Panc1 (cell line): ENCODE measurements at regions of chr3 and their contacts with region 1.

Region 1: GRCh38 chr3:128736601-128737000 is 10.6 kb downstream of the RAB7A start:
- DNase-seq: no peak
- ATAC-seq: no peak
- H3K4me3 ChIP-seq: no peak overlapping the region
- H3K27ac ChIP-seq: no peak overlapping the region
- H3K4me1 ChIP-seq: peaks cover 16% of the 10 kb centered on the region
- H3K27me3 ChIP-seq: no peaks in the 10 kb centered on the region
- CTCF ChIP-seq: no peak

Region 2: DNA sequence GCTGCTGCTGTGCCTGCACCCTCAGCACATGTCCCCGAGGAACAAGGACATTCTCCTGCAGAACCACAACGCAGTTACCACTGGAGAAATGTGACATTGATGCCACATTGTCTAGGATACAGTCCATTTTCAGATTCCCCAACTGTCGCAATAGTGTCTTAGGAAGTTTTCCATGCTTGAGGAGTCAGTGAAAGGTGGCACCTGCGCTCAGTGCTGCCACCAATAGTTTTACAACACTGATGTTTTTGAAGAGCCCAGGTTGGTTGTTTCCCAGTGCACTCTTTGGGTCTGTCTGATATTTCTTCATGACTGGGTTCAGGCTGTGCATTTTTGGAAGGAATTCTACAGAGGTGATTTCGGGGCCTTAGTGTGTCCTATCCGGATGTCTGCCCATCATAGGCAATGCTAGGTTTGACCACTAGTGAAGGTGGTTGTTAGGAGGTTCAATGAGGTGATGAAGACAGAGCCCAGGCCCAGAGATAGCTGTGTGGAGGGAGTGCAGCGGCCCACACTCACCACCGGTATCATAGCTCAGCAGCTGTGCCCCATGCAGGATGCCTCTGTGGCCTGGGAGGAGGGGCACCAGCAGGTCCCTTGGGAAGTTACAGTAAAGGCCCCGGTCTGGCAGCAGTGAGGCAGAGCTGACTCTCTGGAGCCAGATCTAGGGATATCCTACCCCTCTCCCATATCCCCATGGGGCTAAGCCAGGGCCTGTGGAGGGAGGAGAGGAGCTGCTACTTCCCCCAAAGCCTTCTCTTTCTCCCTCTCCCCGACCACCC is 366.5 kb before region 1 on chr3:
- CTCF ChIA-PET with region 1: no interaction called
- POLR2A ChIA-PET with region 1: no interaction called
- in situ Hi-C with region 1: no loop called
- intact Hi-C with region 1: no loop called
- DNase-seq: no peak
- ATAC-seq: no peak
- H3K4me3 ChIP-seq: no peak overlapping the region
- H3K27ac ChIP-seq: no peak overlapping the region
- H3K4me1 ChIP-seq: no peaks in the 10 kb centered on the region
- H3K27me3 ChIP-seq: no peaks in the 10 kb centered on the region
- CTCF ChIP-seq: no peak

Region 3: DNA sequence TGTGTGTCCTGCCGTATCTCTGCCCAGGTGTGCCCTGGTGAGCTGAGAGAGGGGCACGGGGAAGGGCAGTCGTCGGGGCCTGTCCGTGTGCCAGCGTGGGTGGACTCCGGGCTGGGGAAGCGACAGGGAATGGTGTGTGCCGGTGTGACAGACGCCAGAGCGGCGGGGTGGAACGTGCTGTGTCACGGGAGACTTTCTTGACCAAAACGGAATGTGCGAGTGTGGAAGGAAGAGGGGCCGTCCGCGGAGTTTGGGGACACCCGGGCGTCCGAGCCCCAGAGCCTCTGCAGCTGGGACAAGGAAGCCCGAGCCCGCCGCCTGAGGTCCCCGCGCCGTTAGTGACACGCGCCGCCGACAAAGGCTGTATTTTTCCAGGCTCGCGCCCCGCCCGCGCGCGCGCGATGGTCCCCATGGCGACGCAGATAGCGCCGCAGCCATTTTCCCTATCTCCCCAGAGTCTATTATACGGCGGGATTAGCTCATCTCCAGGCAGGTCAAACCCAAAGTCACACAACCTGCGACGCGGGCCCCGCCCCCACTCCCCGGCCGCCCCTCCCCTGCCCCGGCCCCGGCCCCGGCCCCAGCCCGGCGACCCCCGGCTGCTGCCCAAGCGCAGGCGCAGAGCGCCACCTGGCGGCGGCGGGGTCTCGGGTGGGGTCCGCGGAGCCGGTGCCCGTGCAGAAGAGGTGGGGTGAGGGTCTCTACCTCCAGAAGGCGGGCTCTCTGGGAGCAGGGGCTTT is 239.0 kb before region 1 on chr3:
- CTCF ChIA-PET with region 1: interaction called, 13 read pairs
- POLR2A ChIA-PET with region 1: no interaction called
- in situ Hi-C with region 1: no loop called
- intact Hi-C with region 1: no loop called
- DNase-seq: no peak
- ATAC-seq: peak; percentile 89
- H3K4me3 ChIP-seq: peak overlapping the region; percentile 41 to 55
- H3K27ac ChIP-seq: peak overlapping the region; percentile 80
- H3K4me1 ChIP-seq: peaks cover 18% of the 10 kb centered on the region; the same call in 1 of the 2 replicates
- H3K27me3 ChIP-seq: no peaks in the 10 kb centered on the region
- CTCF ChIP-seq: peak; percentile 99

Region 4: GRCh38 chr3:128532012-128532983 is 204.3 kb before region 1 on chr3:
- CTCF ChIA-PET with region 1: no interaction called
- POLR2A ChIA-PET with region 1: interaction called, 13 read pairs
- in situ Hi-C with region 1: no loop called
- intact Hi-C with region 1: no loop called
- DNase-seq: no peak
- ATAC-seq: no peak
- H3K4me3 ChIP-seq: no peak overlapping the region
- H3K27ac ChIP-seq: no peak overlapping the region
- H3K4me1 ChIP-seq: no peaks in the 10 kb centered on the region
- H3K27me3 ChIP-seq: peaks cover 41% of the 10 kb centered on the region
- CTCF ChIP-seq: no peak

Region 5: GRCh38 chr3:128549283-128550112 is 187.1 kb before region 1 on chr3:
- CTCF ChIA-PET with region 1: no interaction called
- POLR2A ChIA-PET with region 1: no interaction called
- in situ Hi-C with region 1: no loop called
- intact Hi-C with region 1: no loop called
- DNase-seq: no peak
- ATAC-seq: no peak
- H3K4me3 ChIP-seq: no peak overlapping the region
- H3K27ac ChIP-seq: no peak overlapping the region
- H3K4me1 ChIP-seq: 0 out of 2 replicates have a peak, but pooled peaks cover 3% of the 10 kb centered on the region
- H3K27me3 ChIP-seq: no peaks in the 10 kb centered on the region
- CTCF ChIP-seq: no peak

Region 6: DNA sequence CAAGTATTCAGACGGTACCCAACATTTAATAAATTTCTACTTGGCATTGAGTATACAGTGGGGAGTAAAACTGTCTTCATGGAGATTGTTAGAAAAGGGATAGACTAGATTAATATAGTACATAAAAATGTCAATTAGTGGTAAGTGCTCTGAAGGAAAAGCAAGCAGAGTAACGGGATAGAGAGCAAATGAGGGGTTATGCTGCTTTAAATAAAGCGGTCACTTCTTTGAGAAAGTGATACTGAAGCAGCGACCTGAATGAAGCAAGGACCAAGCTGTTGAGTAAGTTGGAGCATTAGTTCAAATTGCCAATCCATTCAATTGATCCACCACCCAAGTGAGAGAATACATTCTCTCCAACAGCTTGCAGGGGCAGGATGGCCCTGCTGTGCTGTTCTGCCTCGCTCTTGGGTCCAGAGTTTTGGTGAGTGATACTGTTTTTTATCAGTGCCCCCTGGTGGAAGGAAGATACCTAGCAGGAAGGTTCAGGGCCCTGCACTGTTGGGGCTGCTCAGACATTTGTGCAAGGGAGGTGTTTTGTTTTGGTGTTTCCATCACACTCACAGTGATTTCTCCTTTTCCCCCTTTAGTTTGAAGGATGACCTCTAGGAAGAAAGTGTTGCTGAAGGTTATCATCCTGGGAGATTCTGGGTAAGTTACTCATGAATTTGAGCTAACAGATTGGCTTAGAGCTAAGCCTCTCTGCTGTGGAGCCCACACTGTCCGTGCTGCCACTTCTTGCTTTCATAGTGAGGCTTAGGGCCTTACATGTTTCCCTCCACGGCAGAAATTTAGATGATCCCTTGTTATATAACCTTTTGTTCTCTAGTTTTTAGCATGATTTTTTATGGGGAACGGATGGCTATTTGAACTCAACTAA is 58.4 kb after region 1 on chr3:
- CTCF ChIA-PET with region 1: no interaction called
- POLR2A ChIA-PET with region 1: no interaction called
- in situ Hi-C with region 1: loop called (anchors 5 kb)
- intact Hi-C with region 1: no loop called
- DNase-seq: peak; percentile 54
- ATAC-seq: peak; percentile 97
- H3K4me3 ChIP-seq: no peak overlapping the region
- H3K27ac ChIP-seq: no peak overlapping the region; the same call in 1 of the 2 replicates
- H3K4me1 ChIP-seq: peaks cover 15% of the 10 kb centered on the region; the same call in 1 of the 2 replicates
- H3K27me3 ChIP-seq: no peaks in the 10 kb centered on the region
- CTCF ChIP-seq: peak; percentile 91

Region 7: DNA sequence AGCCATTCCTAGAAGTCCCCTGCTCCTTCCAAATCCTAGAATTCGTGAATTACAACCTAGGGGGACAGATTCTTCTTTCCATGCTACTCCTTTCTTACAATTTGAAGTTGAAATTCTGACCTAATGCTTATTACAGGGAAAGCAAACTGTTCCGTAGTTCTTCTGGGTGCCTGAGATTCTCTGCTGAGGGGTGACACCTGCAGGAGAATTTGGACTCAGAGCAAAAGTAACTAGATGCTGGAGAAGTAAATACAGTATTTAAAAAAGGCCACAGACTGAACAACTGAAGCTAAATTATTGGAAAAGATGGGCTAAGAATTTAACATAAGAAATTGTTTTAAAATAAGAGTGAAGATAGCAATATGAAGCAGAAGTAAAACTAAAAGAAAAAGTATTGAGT is 180.7 kb after region 1 on chr3:
- CTCF ChIA-PET with region 1: no interaction called
- POLR2A ChIA-PET with region 1: no interaction called
- in situ Hi-C with region 1: no loop called
- intact Hi-C with region 1: no loop called
- DNase-seq: no peak
- ATAC-seq: no peak
- H3K4me3 ChIP-seq: no peak overlapping the region
- H3K27ac ChIP-seq: no peak overlapping the region
- H3K4me1 ChIP-seq: no peaks in the 10 kb centered on the region
- H3K27me3 ChIP-seq: no peaks in the 10 kb centered on the region
- CTCF ChIP-seq: no peak